Panc1 (cell line): ENCODE measurements at regions of chr2 and their contacts with region 1.

Region 1: DNA sequence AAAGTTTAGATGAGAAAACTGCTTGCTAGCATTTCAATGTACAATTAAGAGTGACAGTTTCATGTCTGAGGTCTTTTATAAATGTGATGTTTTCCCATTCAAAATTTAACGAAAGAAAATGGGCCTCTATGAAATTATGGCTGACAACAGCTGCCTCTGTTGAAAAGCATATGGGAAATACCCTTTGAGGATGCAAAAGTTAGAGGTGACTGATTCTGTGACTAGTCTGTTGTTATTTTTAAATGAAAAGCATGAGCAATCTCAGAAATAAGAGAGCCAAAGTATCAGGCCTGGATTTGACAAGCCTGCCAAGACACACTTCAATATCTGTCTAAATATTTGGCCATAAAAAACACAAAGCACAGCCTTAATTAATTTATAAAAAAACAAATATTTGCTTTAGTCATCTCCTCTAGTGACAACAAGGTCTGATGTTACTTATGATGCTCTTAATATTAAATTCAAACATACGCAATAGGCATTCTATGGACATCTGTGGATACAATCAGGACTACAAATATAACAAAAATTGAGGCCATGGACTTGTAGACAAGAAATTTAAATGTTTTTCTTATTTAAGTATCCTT is 580.7 kb downstream of the ERBB4 start:
- DNase-seq: no peak
- ATAC-seq: no peak
- H3K4me3 ChIP-seq: no peak overlapping the region
- H3K27ac ChIP-seq: no peak overlapping the region
- H3K4me1 ChIP-seq: no peaks in the 10 kb centered on the region
- H3K27me3 ChIP-seq: no peaks in the 10 kb centered on the region
- CTCF ChIP-seq: no peak

Region 2: GRCh38 chr2:211977433-211977832 is 19.5 kb after region 1 on chr2:
- CTCF ChIA-PET with region 1: no interaction called
- POLR2A ChIA-PET with region 1: interaction called, 13 read pairs
- in situ Hi-C with region 1: no loop called
- intact Hi-C with region 1: no loop called
- DNase-seq: no peak
- ATAC-seq: no peak
- H3K4me3 ChIP-seq: no peak overlapping the region
- H3K27ac ChIP-seq: no peak overlapping the region
- H3K4me1 ChIP-seq: no peaks in the 10 kb centered on the region
- H3K27me3 ChIP-seq: no peaks in the 10 kb centered on the region
- CTCF ChIP-seq: no peak